Endothelial cell of umbilical vein (primary cell): ENCODE measurements at regions of chr16 and their contacts with region 1.

Region 1: GRCh38 chr16:82755569-82756282 is 129.0 kb downstream of the CDH13 start:
- DNase-seq: no peak
- H3K4me3 ChIP-seq: no peak overlapping the region
- H3K27ac ChIP-seq: peak overlapping the region; percentile 92
- H3K4me1 ChIP-seq: peaks cover 59% of the 10 kb centered on the region
- H3K27me3 ChIP-seq: no peaks in the 10 kb centered on the region
- CTCF ChIP-seq: peak in 1 of 2 donors; percentile 7
- POLR2A ChIP-seq: no peak

Region 2: GRCh38 chr16:82626791-82627261 is 128.9 kb before region 1 on chr16 and contains the start of gene CDH13:
- CTCF ChIA-PET with region 1: interaction called, 7 read pairs
- POLR2A ChIA-PET with region 1: no interaction called
- dilution Hi-C with region 1: no loop called
- intact Hi-C with region 1: loop called (anchors 1 kb)
- DNase-seq: peak; percentile 62
- H3K4me3 ChIP-seq: peak within 1 kb of the TSS; percentile 52 to 82 (median 66)
- H3K27ac ChIP-seq: peak within 1 kb of the TSS; percentile 96
- H3K4me1 ChIP-seq: peaks cover 46% of the 10 kb centered on the region
- H3K27me3 ChIP-seq: peaks cover 0 to 2% of the 10 kb centered on the region in 2 experiments
- CTCF ChIP-seq: no peak
- POLR2A ChIP-seq: no peak
- total RNA-seq, gene CDH13: 98.5 and 124 TPM in 2 replicates

Region 3: DNA sequence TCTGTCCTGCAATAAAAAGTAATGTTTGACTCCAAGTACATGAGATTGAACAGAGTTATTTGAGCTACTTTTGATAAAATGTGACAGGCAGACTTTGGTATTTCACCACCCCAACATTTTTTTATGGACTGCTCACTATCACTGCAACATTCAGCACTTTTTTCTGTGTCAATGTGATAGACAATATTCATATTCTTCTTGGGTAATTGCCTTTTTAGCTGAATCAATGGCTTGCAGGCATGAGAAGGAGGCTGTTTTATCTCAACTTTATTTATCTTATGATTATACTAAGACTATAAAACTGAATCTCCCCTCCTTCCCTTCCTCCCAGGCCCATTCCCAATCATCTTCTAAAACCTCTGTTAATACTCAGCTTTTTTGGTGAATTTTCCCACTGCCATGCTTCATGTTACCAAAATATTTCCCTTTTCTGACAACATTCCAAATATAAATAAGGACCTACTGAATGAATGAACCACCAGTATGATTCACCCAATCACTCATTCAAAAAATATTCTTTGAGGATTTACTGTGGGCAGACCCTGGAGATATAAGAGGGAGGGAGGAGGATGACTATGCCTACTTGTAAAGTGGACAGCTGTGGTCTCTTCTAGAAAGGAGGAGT is 61.4 kb before region 1 on chr16:
- CTCF ChIA-PET with region 1: no interaction called
- POLR2A ChIA-PET with region 1: no interaction called
- dilution Hi-C with region 1: no loop called
- intact Hi-C with region 1: no loop called
- DNase-seq: no peak
- H3K4me3 ChIP-seq: no peak overlapping the region
- H3K27ac ChIP-seq: no peak overlapping the region
- H3K4me1 ChIP-seq: peaks cover 10% of the 10 kb centered on the region
- H3K27me3 ChIP-seq: no peaks in the 10 kb centered on the region
- CTCF ChIP-seq: no peak
- POLR2A ChIP-seq: no peak

Region 4: DNA sequence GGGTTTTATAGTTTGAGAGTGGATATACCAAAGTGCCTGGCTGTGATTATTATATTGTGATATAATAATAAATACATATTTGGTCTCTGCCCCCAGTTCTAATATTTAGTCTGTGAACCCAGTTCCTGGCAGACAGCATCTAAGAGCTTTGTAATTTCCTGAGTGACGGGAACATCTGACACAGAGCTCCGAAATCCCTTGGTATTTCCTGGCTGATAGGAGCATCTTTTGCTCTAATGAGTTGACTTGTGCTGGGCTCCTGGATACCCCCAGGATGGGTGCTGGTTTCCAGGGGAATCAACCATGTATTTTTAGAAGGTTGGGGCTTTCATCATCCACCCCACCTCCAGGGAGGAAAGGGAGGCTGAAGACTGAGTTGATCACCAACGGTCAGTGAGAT is 58.3 kb after region 1 on chr16:
- CTCF ChIA-PET with region 1: interaction called, 5 read pairs
- POLR2A ChIA-PET with region 1: no interaction called
- dilution Hi-C with region 1: no loop called
- intact Hi-C with region 1: loop called (anchors 1 kb)
- DNase-seq: peak; percentile 46
- H3K4me3 ChIP-seq: no peak overlapping the region
- H3K27ac ChIP-seq: peak overlapping the region; percentile 41
- H3K4me1 ChIP-seq: peaks cover 23% of the 10 kb centered on the region
- H3K27me3 ChIP-seq: no peaks in the 10 kb centered on the region
- CTCF ChIP-seq: no peak
- POLR2A ChIP-seq: no peak

Region 5: DNA sequence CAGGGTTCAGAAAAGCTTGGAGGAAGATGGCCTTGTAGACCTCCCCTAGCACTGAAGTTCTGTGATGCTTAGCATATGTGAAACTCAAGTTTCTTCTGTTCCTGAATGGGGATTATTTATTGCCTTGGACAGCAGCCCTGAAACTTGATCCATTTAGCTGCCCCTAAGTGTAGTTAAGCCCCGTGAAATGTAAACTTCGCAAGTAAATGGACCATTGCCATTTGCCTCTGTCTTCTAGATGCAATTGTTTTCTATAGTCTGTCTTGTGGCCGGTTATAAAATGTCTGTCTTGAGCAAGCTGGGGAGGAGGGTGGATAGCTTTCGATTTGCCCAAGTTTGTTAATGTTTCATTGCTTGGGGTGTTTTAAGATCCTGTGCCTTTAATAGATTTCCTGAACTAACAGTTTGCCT is 132.9 kb after region 1 on chr16:
- CTCF ChIA-PET with region 1: no interaction called
- POLR2A ChIA-PET with region 1: no interaction called
- dilution Hi-C with region 1: no loop called
- intact Hi-C with region 1: no loop called
- DNase-seq: peak; percentile 34
- H3K4me3 ChIP-seq: no peak overlapping the region
- H3K27ac ChIP-seq: no peak overlapping the region
- H3K4me1 ChIP-seq: no peaks in the 10 kb centered on the region
- H3K27me3 ChIP-seq: no peaks in the 10 kb centered on the region
- CTCF ChIP-seq: no peak
- POLR2A ChIP-seq: no peak

Region 6: GRCh38 chr16:82995924-82996441 is 240.3 kb after region 1 on chr16:
- CTCF ChIA-PET with region 1: no interaction called
- POLR2A ChIA-PET with region 1: no interaction called
- dilution Hi-C with region 1: no loop called
- intact Hi-C with region 1: loop called (anchors 1 kb)
- DNase-seq: peak; percentile 96
- H3K4me3 ChIP-seq: peak overlapping the region in 1 of 3 experiments; percentile 31
- H3K27ac ChIP-seq: peak overlapping the region; percentile 91
- H3K4me1 ChIP-seq: peaks cover 23% of the 10 kb centered on the region
- H3K27me3 ChIP-seq: no peaks in the 10 kb centered on the region
- CTCF ChIP-seq: no peak
- POLR2A ChIP-seq: no peak

Region 7: GRCh38 chr16:83002351-83003334 is 246.9 kb after region 1 on chr16:
- CTCF ChIA-PET with region 1: interaction called, 3 read pairs
- POLR2A ChIA-PET with region 1: interaction called, 3 read pairs
- dilution Hi-C with region 1: no loop called
- intact Hi-C with region 1: loop called (anchors 2 kb)
- DNase-seq: peak; percentile 88
- H3K4me3 ChIP-seq: no peak overlapping the region
- H3K27ac ChIP-seq: peak overlapping the region; percentile 73
- H3K4me1 ChIP-seq: peaks cover 36% of the 10 kb centered on the region
- H3K27me3 ChIP-seq: no peaks in the 10 kb centered on the region
- CTCF ChIP-seq: no peak
- POLR2A ChIP-seq: peak; percentile 49